Esophagus muscularis mucosa (tissue), 4 donors: ENCODE measurements at regions of chr5 and their contacts with region 1.

Region 1: DNA sequence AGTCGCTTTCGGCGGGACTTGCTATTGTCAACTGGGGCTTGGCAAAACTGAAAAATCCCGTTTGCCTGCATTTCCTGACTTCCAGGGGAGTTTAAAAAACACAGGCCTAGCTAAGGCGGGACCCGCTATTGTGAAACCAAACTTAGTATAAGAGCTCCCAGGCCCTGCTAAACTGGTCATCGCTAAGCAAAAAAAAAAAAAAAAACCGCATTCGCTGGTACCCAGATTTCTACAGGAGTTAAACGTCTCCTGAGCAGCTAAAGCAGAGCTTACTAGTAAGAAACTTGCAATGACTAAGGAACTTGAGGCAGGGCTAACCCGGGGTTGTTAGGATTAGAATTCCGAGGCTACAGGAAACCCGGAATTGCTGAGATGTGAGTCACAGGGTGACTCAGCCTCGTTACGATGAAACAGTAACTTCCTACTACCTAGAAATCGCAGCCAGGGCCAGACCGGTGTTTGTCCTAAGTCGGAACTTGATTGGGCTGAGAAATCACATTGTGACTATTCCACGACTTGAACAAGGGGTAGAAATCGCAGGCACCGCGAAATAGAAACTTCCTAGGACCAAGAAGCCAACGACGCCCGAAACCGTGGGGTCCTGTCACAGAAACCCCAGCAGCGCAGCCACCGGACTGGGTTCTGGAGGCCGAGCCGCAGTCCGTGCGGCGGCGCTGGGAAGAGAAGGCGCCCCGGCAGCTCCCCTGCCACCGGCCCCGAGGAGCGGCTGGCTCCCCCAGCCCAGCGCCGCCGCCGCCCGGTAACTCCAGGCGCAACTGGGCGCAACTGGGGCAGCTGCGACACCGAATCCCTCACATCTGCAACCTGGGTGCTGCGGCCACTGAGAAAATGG is 89.5 kb downstream of the ANXA2R start:
- DNase-seq: no peak
- H3K4me3 ChIP-seq: peak overlapping the region; percentile 51 to 63 (median 55)
- H3K27ac ChIP-seq: peak overlapping the region; percentile 74 to 89 (median 83)
- H3K4me1 ChIP-seq: peaks cover 24 to 43% (median 40%) of the 10 kb centered on the region in 4 donors
- H3K27me3 ChIP-seq: peaks cover 0 to 99% (median 61%) of the 10 kb centered on the region in 4 donors
- CTCF ChIP-seq: no peak
- EP300 ChIP-seq: no peak
- POLR2A ChIP-seq: no peak

Region 2: GRCh38 chr5:42908509-42909488 is 41.9 kb before region 1 on chr5:
- intact Hi-C with region 1: no loop called
- DNase-seq: peak; percentile 93
- H3K4me3 ChIP-seq: peak overlapping the region; percentile 52 to 57 (median 54)
- H3K27ac ChIP-seq: no peak overlapping the region
- H3K4me1 ChIP-seq: peaks cover 4 to 11% (median 8%) of the 10 kb centered on the region in 4 donors
- H3K27me3 ChIP-seq: peaks cover 0 to 16% (median 0%) of the 10 kb centered on the region in 4 donors
- CTCF ChIP-seq: peak; percentile 77 to 87 (median 81)
- EP300 ChIP-seq: no peak
- POLR2A ChIP-seq: no peak

Region 3: DNA sequence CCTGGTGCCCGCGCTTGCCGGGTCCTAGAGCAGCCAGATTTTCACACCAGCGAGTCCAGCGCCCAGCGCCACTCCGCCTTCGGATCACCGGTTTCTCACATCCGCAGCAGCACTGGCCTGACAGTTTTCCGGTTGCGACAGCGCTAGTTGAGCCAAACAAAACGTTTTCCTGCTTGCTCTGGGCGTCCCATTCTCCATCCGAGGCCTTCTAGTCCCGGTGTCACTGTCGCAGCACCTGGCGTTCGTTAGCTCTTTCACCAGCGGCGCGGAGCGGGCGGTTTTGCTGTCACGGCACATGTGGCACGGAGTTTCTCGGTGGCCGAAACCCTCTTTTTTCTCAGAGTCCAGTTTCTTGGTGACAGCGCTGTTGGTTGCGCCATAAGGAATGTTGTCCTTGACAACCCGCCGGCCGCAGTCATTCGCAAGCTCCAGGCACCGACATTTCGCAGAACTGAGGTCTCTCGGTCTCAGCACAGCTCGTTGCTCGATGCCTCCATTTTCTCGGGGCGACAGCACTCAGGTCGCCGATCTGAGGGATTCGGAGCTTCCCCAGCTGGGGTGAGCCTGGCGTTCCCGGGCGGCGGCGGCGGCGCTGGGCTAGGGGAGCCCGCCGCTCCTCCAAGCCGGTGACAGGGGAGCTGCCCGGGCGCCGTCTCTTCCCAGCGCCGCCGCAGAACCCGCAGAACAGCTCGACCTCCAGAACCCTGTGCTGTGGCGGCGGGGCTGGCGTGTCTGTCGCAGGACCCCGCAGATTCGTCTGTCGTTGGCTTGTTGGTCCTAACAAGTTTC is 41.6 kb after region 1 on chr5:
- intact Hi-C with region 1: loop called (anchors 2 kb)
- DNase-seq: peak; percentile 96
- H3K4me3 ChIP-seq: peak overlapping the region; percentile 58 to 65 (median 60)
- H3K27ac ChIP-seq: peak overlapping the region; percentile 77 to 93 (median 88)
- H3K4me1 ChIP-seq: peaks cover 12 to 27% (median 19%) of the 10 kb centered on the region in 4 donors
- H3K27me3 ChIP-seq: peaks cover 0 to 82% (median 58%) of the 10 kb centered on the region in 4 donors
- CTCF ChIP-seq: no peak
- EP300 ChIP-seq: no peak
- POLR2A ChIP-seq: peak; percentile 20

Region 4: DNA sequence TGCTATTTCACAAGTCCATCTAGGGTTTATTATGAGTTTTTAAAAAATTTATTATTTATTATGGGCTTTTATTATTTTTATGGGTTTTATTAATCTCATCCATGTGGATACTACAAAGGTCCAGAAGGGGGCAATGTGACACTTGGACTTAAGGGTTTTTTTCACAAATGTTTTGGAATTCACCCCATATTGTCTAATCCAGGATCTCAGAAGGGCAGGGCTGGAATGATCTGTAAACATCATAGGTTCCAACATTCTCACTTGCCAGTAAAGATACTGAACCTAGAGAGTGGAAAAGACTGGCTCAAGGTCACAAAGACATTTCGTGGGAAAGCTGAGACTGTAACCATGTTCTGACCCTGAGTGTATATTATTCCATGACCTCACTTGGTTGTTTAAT is 277.0 kb after region 1 on chr5:
- intact Hi-C with region 1: no loop called
- DNase-seq: no peak
- H3K4me3 ChIP-seq: no peak overlapping the region
- H3K27ac ChIP-seq: no peak overlapping the region
- H3K4me1 ChIP-seq: no peaks in the 10 kb centered on the region
- H3K27me3 ChIP-seq: no peaks in the 10 kb centered on the region
- CTCF ChIP-seq: peak; percentile 26 to 41 (median 32)
- EP300 ChIP-seq: no peak
- POLR2A ChIP-seq: no peak